CD4-positive, alpha-beta T cell (primary cell): ENCODE measurements at regions of chr2 and their contacts with region 1.

Region 1: DNA sequence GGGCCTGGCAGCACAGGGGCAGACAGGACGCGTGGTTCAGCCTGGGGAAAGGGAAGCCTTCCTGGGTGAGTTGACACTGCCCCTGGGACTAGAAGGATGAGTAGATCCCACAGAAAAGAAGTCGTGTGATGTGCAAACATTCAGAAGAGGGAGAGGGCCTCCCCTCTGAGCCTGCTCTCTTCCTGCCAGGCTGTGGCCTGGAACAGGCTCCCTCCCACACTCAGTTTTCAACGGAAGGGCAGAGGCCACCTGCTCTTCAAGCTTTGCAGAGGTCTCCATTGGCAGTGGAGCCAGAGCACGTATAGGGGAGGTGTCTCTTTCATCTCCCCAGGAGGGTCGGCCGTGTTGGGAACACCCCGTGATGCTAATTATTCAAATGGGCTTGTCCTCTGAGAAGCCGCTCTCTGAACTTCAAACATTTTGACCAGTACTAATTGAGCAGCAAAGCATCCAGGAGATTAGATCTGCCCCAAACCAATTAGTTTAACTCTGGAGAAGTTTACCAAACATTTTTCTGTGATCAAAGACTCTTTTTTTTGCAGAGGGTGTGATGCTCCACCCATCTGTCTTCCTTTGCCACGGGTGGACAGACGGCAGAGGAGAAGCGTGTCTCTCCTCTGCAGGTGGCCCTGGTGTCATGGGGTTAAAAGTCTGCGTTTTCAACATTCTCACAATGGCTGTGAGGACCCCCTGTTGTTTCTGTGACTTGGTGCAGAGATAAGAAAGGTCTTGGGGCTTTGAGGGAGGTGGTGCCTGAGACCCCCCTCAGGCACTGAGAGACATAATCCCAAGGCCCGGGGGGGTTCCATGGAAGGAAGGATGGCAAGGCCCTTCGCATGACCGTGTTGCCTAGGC is 29.5 kb upstream of the ODC1 start:
- DNase-seq: no peak
- ATAC-seq: peak; percentile 32
- H3K4me3 ChIP-seq: no peak overlapping the region
- H3K4me3 Mint-ChIP-seq: no peak overlapping the region
- H3K27ac ChIP-seq: no peak overlapping the region
- H3K27ac Mint-ChIP-seq: no peak overlapping the region
- H3K4me1 ChIP-seq: peaks cover 5% of the 10 kb centered on the region
- H3K4me1 Mint-ChIP-seq: peaks cover 17% of the 10 kb centered on the region
- H3K27me3 ChIP-seq: no peaks in the 10 kb centered on the region
- H3K27me3 Mint-ChIP-seq: no peaks in the 10 kb centered on the region
- CTCF ChIP-seq: no peak

Region 2: DNA sequence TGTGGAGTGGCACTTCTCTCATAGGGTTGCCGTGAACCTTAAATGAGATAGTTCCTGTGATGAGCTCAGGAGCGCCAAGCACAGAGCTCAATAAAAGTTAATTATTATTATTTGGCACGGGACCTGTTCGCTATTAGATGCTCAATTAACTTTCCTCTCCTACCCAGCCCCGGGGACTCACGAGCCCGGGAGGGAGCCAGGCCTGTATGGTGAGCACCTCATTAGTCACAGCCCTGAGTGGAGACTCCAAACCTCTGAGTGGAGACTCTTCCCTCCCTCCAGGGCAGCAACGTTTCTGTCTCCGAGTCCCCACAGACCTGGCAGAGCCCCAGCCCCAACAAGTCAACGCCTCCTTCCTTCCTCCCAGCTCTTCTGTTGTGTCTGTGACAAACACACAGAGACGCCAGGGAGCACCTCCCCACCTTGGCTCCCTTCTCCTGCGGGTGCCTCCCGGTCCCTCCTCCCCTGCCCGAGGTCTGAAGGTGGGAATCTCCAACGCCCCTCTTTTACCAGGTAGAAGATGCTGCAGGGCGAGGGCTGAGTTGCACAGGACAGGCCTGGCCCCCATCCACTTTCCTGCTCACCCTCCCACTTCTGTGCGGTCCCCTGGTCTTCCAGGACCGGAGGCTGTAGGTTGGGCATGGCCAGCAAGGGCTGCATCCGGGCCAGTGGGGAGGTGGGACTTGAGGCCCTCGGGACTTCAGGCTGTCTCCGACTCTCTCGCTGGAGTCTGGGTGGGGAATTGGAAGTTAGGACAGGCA is 23.1 kb after region 1 on chr2:
- CTCF ChIA-PET with region 1: no interaction called
- POLR2A ChIA-PET with region 1: no interaction called
- intact Hi-C with region 1: no loop called
- DNase-seq: no peak
- ATAC-seq: no peak
- H3K4me3 ChIP-seq: no peak overlapping the region
- H3K4me3 Mint-ChIP-seq: no peak overlapping the region
- H3K27ac ChIP-seq: no peak overlapping the region
- H3K27ac Mint-ChIP-seq: no peak overlapping the region
- H3K4me1 ChIP-seq: peaks cover 7% of the 10 kb centered on the region
- H3K4me1 Mint-ChIP-seq: peaks cover 14% of the 10 kb centered on the region
- H3K27me3 ChIP-seq: peaks cover 0 to 7% of the 10 kb centered on the region in 2 experiments
- H3K27me3 Mint-ChIP-seq: peaks cover 8% of the 10 kb centered on the region
- CTCF ChIP-seq: no peak

Region 3: DNA sequence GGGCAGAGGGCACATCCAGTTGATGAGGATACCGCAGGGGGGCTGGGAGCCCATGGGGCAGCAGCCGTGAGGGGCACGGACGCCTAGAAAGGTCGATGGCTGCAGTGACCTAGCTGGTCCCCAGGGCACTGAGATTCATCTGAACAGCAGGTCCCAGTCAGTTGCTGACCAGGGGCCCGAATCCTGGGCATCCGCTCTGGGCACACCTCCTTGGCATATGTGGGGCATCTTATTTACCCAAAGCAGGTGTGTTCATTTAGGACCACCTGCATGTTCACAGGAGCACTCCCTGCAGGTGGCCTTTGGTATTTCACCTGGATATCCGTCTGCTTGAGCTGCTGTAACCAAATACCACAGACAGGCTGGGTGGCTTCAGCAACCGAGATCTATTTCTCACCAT is 42.5 kb after region 1 on chr2:
- CTCF ChIA-PET with region 1: no interaction called
- POLR2A ChIA-PET with region 1: no interaction called
- intact Hi-C with region 1: loop called in 1 of 2 experiments (anchors 5 kb)
- DNase-seq: peak in 1 of 14 experiments; percentile 10
- ATAC-seq: peak; percentile 41
- H3K4me3 ChIP-seq: no peak overlapping the region
- H3K4me3 Mint-ChIP-seq: no peak overlapping the region
- H3K27ac ChIP-seq: no peak overlapping the region
- H3K27ac Mint-ChIP-seq: no peak overlapping the region
- H3K4me1 ChIP-seq: no peaks in the 10 kb centered on the region
- H3K4me1 Mint-ChIP-seq: no peaks in the 10 kb centered on the region
- H3K27me3 ChIP-seq: no peaks in the 10 kb centered on the region
- H3K27me3 Mint-ChIP-seq: no peaks in the 10 kb centered on the region
- CTCF ChIP-seq: no peak

Region 4: DNA sequence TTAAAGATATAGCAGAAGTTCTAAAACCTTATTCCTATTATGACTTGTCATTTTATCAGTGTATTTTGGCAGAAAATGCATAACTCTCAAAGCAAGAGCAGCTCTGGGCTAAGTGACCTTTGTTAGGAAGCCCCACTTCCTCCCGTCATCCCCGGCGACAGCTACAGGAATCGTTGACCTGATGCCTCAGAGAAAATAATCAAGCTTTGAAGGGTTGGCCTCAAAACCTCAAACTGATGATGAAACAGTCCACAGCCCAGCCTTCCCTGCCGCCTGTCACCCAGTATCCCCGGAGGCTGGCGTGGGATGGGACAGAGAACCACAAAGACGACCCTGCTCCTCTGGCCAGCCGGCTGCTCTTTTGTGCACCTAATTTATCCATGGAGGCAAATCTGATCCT is 499.3 kb after region 1 on chr2:
- CTCF ChIA-PET with region 1: no interaction called
- POLR2A ChIA-PET with region 1: no interaction called
- intact Hi-C with region 1: no loop called
- DNase-seq: no peak
- ATAC-seq: no peak
- H3K4me3 ChIP-seq: no peak overlapping the region
- H3K4me3 Mint-ChIP-seq: no peak overlapping the region
- H3K27ac ChIP-seq: no peak overlapping the region
- H3K27ac Mint-ChIP-seq: no peak overlapping the region
- H3K4me1 ChIP-seq: no peaks in the 10 kb centered on the region
- H3K4me1 Mint-ChIP-seq: no peaks in the 10 kb centered on the region
- H3K27me3 ChIP-seq: peaks cover 12 to 14% of the 10 kb centered on the region in 2 experiments
- H3K27me3 Mint-ChIP-seq: peaks cover 25% of the 10 kb centered on the region
- CTCF ChIP-seq: no peak